PC-3 (cell line): ENCODE measurements at regions of chr11 and their contacts with region 1.

Region 1: GRCh38 chr11:119474682-119475596 is 52.0 kb upstream of the THY1 start:
- DNase-seq: peak; percentile 86
- ATAC-seq: peak; percentile 50
- H3K4me3 ChIP-seq: no peak overlapping the region
- H3K27ac ChIP-seq: no peak overlapping the region
- H3K4me1 ChIP-seq: peaks cover 24% of the 10 kb centered on the region
- H3K27me3 ChIP-seq: no peaks in the 10 kb centered on the region
- CTCF ChIP-seq: peak; percentile 98

Region 2: DNA sequence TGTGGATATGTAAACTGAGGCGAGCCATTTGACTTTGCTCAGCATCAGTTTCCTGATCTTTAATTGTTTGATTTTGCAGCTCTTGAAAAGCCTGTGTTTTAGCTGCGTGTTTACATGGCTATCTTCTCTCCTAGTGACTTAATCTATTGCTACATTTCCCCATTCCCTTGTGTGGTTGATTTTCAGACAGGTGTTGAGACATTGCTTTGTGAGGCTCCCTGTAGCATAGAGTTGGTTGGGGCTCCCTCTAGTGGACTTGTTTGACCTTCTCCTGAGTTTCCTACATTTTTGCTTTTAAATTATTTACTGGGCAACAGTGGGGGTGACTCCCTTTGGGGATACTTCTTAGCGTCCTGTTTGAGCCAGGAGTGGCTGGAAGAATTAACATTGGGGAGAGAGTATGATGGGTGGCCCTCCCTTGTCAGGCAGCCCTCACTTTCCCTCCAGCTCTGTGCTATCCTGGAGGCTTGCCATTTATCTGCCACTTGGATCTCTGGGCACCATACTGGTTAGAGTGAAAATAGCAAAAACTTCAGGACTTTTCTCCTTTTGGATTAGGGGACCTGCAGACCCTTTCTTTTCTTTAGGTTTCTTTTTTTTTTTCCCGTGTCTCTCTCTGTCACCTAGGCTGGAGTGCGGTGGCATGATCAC is 278.0 kb before region 1 on chr11:
- CTCF ChIA-PET with region 1: no interaction called
- POLR2A ChIA-PET with region 1: no interaction called
- intact Hi-C with region 1: no loop called
- DNase-seq: peak; percentile 94
- ATAC-seq: peak; percentile 87
- H3K4me3 ChIP-seq: no peak overlapping the region
- H3K27ac ChIP-seq: no peak overlapping the region
- H3K4me1 ChIP-seq: peaks cover 4% of the 10 kb centered on the region; the same call in 1 of the 2 replicates
- H3K27me3 ChIP-seq: no peaks in the 10 kb centered on the region
- CTCF ChIP-seq: peak; percentile 95

Region 3: DNA sequence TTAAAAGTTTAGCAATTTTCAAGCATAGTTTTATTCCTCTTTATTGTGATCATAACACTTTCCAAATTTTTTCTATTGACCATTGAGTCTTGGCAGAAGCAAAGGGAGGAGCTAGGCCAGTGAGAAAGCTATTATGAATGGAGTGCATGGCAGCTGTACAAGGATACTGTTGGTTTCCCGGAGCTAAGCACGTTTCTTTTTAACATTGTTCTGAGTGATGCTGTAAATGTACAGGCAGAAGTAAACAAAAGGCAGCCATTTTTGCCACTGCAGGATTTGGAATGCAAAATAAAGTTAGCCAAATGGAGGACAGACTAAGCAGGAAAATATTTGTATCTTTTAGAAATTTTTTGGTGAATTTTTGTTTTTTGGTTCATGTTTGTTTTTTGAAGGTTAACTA is 252.6 kb before region 1 on chr11:
- CTCF ChIA-PET with region 1: no interaction called
- POLR2A ChIA-PET with region 1: no interaction called
- intact Hi-C with region 1: no loop called
- DNase-seq: peak; percentile 28
- ATAC-seq: no peak
- H3K4me3 ChIP-seq: no peak overlapping the region
- H3K27ac ChIP-seq: no peak overlapping the region
- H3K4me1 ChIP-seq: peaks cover 26% of the 10 kb centered on the region
- H3K27me3 ChIP-seq: no peaks in the 10 kb centered on the region
- CTCF ChIP-seq: no peak

Region 4: DNA sequence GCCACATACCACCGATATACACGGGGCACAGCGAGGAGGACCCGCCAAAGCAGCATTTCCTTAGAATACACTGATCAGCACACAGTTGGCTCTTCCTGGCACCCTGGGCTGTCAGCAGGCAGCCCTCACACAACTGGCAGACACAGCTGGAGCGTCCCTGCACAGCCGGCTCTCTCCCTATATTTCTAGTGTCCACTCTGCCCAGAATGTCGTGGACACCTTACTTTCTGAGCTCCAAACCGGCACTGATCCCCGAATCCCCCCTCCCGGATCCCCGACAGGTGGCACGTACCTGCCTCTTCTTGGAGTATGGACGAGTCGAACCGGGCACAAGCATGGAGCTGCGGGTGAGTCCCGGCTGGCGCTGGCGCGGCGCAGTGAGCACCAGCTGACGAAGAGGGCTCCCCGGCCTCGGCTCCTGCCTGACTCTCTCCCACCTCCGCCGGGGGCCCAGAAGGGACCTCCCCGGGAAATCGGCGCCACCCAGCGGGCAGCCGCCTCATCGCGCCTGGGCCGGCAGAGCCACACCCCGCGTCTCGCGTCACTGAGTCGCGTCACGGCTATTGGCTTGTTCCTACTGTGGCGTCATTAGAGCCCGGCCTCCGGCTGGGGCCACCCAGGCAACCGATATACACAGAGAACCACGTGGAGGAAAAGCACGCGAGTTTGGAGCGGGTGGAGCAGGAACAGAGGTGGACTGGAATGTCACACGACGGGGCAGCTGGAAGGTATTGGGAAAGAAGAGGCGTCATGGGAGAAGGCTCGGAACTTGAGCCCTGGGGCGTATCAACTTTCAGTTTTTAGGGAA is 93.6 kb before region 1 on chr11 and contains the start of gene USP2:
- CTCF ChIA-PET with region 1: interaction called, 14 read pairs
- POLR2A ChIA-PET with region 1: no interaction called
- intact Hi-C with region 1: loop called (anchors 1 kb)
- DNase-seq: peak; percentile 99
- ATAC-seq: peak; percentile 97
- H3K4me3 ChIP-seq: peak within 1 kb of the TSS; percentile 80
- H3K27ac ChIP-seq: peak within 1 kb of the TSS; percentile 25
- H3K4me1 ChIP-seq: peaks cover 32% of the 10 kb centered on the region
- H3K27me3 ChIP-seq: no peaks in the 10 kb centered on the region
- CTCF ChIP-seq: peak; percentile 96
- total RNA-seq, gene USP2: 0.92 and 1.8 TPM in 2 replicates

Region 5: DNA sequence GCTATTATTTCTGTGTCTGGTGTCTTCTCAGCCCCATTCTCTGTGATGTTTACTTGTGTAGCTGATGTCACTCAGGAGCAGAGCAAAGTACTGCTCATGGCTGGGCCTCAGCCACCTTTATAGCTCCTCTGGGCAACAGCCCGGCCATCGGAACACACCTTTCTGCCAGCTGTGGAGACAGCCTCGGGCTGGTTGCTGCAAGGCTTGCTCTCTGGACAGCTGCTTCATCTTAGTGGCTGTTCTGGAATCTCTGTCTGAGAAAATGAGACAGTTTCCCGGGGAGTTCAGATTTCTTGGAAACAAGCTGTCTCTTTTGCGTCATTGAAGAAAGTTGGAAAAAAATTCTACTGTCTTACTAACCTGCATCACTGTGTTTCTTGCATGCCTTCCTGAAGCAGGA is 71.9 kb before region 1 on chr11:
- CTCF ChIA-PET with region 1: no interaction called
- POLR2A ChIA-PET with region 1: no interaction called
- intact Hi-C with region 1: no loop called
- DNase-seq: no peak
- ATAC-seq: no peak
- H3K4me3 ChIP-seq: no peak overlapping the region
- H3K27ac ChIP-seq: no peak overlapping the region
- H3K4me1 ChIP-seq: no peaks in the 10 kb centered on the region
- H3K27me3 ChIP-seq: no peaks in the 10 kb centered on the region
- CTCF ChIP-seq: no peak

Region 6: DNA sequence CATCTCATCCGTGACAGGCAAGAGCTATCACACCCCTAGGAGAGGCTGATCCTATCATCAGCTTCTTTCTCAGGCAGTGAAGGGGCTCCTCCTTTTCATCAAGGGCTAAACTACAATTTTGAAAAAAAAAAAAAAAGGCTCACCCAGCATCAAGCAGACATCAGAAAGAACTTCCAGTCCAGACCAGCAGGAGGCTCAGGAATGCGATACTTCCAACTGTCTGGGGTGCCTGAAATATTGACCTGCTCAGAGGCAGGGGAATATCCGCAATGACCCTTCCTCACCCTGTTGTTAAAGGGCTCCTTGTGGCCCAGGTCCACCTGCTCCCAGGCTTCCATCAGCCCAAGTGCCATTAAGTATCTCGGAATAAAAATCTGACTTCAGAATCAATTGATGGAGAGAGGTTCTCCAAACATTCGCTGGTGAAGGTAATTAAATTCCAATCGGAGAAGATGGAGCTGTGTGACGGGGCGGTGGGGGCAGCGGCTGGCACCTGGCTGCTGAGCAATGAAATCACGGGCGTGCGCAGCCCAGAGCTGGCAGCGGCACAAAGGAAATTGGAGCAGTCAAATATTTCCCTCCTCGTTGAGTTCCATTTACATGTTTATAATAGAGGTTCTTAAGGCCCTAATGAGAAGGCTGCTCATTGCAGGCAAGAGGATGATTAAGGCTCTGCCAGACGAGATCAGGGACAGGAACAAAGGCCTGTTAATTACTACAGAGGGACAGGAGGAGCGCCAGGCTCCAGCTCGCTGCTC is 17.0 kb after region 1 on chr11:
- CTCF ChIA-PET with region 1: no interaction called
- POLR2A ChIA-PET with region 1: no interaction called
- intact Hi-C with region 1: no loop called
- DNase-seq: peak; percentile 36
- ATAC-seq: no peak
- H3K4me3 ChIP-seq: no peak overlapping the region
- H3K27ac ChIP-seq: no peak overlapping the region
- H3K4me1 ChIP-seq: no peaks in the 10 kb centered on the region
- H3K27me3 ChIP-seq: no peaks in the 10 kb centered on the region
- CTCF ChIP-seq: peak; percentile 67